PC-3 (cell line): ENCODE measurements at regions of chr16 and their contacts with region 1.

Region 1: DNA sequence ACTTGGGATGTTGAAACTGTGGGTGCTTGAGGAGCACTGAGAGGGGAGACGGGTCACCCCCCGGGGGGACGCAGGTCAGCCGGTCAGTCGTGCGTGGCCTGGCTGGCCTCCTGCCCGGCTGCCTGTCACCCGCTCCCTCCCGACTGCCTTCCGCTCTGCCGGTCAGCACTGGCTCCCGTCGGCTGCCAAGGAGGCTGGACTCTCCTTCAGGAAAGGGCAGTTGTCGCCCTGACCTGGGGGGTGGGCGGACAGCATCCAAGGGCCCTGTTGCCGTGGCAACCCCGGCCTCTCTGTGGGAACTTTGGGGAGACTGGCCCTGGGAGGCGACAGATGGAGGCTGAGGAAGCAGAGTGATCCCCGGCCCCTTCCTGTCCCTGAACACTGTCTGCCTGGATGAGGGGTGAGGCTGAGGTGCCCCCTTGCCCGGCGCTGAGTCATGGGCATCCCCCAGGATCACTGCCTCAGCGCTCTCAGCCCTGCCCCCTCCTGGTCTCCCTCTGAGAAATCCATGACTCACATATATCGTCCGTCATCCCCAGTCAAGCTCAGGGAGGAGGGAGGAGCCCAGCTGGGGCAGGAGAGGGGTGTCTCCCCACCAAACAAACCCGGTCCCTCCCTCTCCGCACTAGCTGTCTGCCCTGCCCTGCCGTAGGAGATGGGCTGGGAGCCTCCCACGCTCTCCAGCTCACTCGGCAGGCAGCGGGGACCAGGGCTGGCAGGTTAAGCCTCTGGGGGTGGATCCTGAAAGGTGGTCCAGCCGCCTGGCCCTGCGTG is at the start of gene ADGRG1:
- DNase-seq: peak; percentile 92
- ATAC-seq: peak; percentile 76
- H3K4me3 ChIP-seq: peak within 1 kb of the TSS; percentile 71
- H3K27ac ChIP-seq: peak within 1 kb of the TSS; percentile 94
- H3K4me1 ChIP-seq: peaks cover 63% of the 10 kb centered on the region
- H3K27me3 ChIP-seq: no peaks in the 10 kb centered on the region
- CTCF ChIP-seq: peak; percentile 10; the same call in 1 of the 2 replicates
- total RNA-seq, gene ADGRG1: 33.7 and 41.5 TPM in 2 replicates

Region 2: DNA sequence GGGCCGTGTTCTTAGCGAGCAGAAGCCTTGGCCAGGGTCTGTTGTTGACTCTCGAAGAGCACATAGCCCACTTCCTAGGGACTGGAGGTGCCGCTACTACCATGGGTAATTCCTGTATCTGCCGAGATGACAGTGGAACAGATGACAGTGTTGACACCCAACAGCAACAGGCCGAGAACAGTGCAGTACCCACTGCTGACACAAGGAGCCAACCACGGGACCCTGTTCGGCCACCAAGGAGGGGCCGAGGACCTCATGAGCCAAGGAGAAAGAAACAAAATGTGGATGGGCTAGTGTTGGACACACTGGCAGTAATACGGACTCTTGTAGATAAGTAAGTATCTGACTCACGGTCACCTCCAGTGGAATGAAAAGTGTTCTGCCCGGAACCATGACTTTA is 423.5 kb before region 1 on chr16:
- CTCF ChIA-PET with region 1: no interaction called
- POLR2A ChIA-PET with region 1: no interaction called
- intact Hi-C with region 1: no loop called
- DNase-seq: no peak
- ATAC-seq: no peak
- H3K4me3 ChIP-seq: no peak overlapping the region
- H3K27ac ChIP-seq: no peak overlapping the region
- H3K4me1 ChIP-seq: no peaks in the 10 kb centered on the region
- H3K27me3 ChIP-seq: no peaks in the 10 kb centered on the region
- CTCF ChIP-seq: no peak

Region 3: GRCh38 chr16:57643147-57643874 is 15.1 kb after region 1 on chr16:
- CTCF ChIA-PET with region 1: interaction called, 3 read pairs
- POLR2A ChIA-PET with region 1: interaction called, 5 read pairs
- intact Hi-C with region 1: loop called (anchors 1 kb)
- DNase-seq: peak; percentile 73
- ATAC-seq: peak; percentile 57
- H3K4me3 ChIP-seq: no peak overlapping the region
- H3K27ac ChIP-seq: peak overlapping the region; percentile 86
- H3K4me1 ChIP-seq: peaks cover 59% of the 10 kb centered on the region
- H3K27me3 ChIP-seq: no peaks in the 10 kb centered on the region
- CTCF ChIP-seq: no peak

Region 4: DNA sequence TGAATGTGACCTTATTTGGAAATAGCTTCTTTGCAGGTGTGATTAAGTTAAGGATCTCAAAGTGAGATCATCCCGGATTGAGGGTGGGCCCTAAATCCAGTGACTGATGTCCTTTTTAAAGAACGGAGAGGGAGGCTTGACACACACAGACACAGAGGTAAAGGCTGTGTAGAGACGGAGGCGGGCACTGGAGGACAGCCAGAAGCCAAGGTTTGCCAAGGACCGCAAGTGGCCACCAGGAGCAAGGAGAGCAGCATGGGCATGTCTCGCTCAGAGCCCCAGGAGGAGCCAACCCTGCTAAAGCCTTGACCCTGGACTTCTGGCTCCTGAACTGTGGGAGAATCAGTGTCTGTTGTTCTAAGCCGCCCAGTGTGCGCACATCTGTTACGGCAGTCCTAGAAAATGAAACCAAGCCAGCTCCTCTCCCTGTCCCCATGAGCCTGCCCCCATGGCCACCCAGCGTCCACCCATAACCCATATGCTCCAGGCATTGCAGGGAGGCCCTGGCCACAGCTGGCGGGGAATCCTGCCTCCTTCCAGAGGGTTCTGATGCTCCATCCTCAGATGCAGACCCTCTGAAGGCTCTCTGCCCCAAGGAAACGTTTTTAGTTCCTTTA is 327.5 kb after region 1 on chr16:
- CTCF ChIA-PET with region 1: no interaction called
- POLR2A ChIA-PET with region 1: no interaction called
- intact Hi-C with region 1: no loop called
- DNase-seq: no peak
- ATAC-seq: no peak; the same call in 1 of the 2 replicates
- H3K4me3 ChIP-seq: no peak overlapping the region
- H3K27ac ChIP-seq: no peak overlapping the region
- H3K4me1 ChIP-seq: no peaks in the 10 kb centered on the region
- H3K27me3 ChIP-seq: no peaks in the 10 kb centered on the region
- CTCF ChIP-seq: no peak